GM10248 (cell line): ENCODE measurements at regions of chr13 and their contacts with region 1.

Region 1: DNA sequence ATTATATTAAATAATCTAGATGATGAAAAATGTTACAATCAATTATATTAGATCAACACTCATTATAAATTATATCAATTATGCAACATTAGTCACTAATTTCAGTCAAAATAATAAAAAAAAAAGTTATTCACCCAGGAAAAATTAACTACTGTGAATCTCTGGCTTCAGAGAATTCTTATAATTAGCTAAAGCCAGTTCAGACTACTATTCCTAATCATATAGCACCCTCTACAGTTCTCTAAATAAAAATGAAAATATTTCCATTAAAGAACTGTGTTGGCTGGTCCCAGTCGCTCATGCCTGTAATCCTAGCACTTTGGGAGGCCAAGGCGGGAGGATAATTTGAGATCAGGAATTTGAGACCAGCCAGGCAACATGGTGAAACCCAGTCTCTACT is 33.0 kb downstream of the XPO4 start:
- DNase-seq: no peak
- CTCF ChIP-seq: no peak

Region 2: DNA sequence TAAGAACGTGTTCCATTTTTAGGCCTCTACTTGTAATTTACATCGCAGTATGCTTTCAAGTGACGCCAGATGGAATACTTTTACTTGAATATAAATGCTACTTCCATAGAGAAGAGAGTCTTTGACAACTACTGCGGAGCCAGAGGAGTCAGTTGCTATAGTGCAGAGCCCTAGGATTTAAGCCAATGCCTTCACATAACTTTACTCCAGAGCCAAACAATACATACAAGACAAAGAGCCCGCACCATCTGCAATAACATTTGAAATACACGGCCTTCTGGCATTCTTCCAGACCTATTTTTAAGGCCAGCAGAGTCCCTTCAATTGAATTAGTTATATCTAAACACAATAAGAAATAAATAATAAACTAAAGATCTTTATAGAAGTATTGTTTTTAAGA is 26.4 kb before region 1 on chr13:
- CTCF ChIA-PET with region 1: interaction called, 12 read pairs
- POLR2A ChIA-PET with region 1: no interaction called
- DNase-seq: no peak
- CTCF ChIP-seq: no peak

Region 3: DNA sequence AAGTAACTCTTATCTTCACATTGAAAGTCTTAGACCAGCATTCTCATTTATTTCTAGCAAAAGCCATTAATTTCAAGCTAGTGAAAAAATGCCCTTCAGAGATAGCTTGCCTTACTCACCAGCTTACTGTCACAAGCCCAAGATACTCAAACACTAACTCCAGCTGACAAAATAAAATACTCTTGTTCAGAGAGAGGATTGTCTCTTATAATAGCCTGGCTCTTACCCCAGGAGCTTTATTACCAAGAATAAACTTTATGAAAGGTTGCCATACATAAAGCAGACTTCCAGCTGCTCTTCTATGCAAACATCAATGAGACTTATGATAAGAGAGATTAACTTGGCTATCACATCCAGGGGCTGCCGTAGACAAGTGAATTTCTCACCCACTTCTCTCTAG is 20.6 kb before region 1 on chr13:
- CTCF ChIA-PET with region 1: interaction called, 12 read pairs
- POLR2A ChIA-PET with region 1: no interaction called
- DNase-seq: no peak
- CTCF ChIP-seq: no peak